ENCODE measurements at regions of chr7 and their contacts with region 1.

Region 1: DNA sequence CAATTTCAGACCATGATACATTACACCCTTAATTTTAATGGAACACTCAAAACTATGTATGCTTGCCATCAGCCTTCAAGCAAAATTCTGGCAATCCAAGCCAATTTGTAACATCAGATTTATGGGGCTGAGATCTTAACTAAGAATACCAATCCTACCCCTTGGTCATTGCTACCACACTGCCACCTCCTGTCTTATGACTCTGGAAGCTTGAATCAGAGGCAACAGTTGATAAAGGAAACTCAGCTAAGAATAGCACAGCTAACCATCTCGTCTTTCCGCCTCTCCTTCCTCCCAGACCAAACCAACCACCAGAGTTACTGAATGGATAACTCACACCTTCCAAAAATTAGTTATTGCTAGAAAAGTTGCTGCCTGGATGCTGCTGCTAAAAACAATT is 7.4 kb downstream of the IGF2BP3 start:
- DNase-seq: no peak
- H3K4me3 ChIP-seq: no peak overlapping the region
- CTCF ChIP-seq: peak; percentile 37

Region 2: GRCh38 chr7:22876986-22877729 is 585.7 kb before region 1 on chr7:
- CTCF ChIA-PET with region 1: no interaction called
- POLR2A ChIA-PET with region 1: no interaction called
- DNase-seq: no peak
- H3K4me3 ChIP-seq: no peak overlapping the region
- CTCF ChIP-seq: no peak

Region 3: DNA sequence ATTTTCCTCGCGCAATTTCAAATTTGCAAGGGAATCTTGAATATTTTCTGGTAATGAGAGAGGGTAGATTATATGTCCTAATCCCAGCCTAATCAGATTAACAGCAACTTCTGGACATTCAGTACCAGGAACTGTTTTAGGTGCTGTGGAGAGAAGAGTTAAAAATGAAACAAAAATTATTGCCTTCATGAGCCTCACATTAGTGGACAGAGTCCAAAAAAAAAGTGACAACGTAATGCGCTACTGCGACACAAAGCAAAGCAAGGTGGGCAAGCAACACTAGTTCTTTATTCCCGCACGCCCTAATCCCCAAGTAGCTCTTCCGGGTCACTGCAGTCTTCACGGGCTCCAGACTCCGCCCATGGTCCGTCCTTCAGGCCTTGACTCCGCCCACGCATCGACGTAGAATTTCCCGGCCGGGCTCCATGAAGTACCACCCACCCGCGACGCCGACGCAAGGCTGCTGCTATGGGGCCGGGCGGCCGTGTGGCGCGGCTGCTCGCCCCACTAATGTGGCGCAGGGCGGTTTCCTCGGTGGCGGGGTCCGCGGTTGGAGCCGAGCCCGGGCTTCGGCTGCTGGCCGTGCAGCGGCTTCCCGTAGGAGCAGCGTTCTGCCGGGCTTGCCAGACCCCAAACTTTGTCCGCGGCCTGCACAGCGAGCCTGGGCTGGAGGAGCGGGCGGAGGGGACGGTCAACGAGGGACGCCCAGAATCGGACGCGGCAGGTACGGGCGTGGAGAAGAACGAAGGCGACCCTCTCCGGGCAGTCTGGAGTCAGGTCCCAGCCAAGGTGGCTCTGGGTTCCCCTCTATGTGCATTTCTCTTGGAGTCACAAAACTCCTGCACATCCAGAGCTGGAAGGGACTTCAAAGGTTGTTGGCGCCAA is 163.7 kb before region 1 on chr7 and contains the start of gene MALSU1:
- CTCF ChIA-PET with region 1: interaction called, 11 read pairs
- POLR2A ChIA-PET with region 1: no interaction called
- DNase-seq: peak; percentile 65
- H3K4me3 ChIP-seq: peak within 1 kb of the TSS; percentile 91
- CTCF ChIP-seq: no peak

Region 4: DNA sequence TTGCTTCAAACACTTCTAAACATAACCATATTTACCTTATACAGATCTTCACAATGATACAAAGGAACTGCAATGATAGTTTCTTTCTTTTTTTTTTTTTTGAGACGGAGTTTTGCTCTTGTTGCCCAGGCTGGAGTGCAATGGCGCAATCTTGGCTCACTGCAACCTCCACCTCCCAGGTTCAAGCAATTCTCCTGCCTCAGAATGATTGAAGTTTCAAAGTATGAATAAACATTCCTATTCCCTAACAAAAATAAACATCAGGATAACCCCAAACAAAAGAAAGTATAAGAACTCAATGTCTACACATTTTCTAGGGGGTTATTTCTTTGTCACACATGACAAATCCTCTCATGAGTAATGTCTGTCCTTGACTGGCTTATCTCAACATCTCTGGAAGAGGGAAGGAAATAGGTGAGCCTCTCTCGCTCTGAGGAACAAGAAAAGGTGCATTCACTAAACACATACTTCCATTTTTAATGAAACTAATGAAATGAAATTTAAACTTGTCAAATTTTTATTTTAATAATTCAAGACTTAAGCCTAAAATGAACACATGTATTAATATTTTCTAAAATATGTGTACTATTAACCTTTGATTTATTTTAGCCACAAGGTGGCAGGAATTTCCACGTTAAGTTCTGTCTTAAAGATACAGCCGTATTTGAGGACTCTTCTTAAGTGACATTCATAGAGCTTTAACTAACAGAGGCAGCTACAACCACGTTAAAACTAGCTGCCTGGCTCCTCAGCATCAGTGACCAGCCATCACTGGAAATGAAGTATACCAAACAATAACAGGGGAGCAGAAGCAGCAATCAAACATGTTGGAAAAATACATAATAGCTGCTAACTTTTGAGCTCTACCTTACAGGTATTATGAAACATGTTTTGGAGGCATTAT is 105.4 kb before region 1 on chr7:
- CTCF ChIA-PET with region 1: interaction called, 25 read pairs
- POLR2A ChIA-PET with region 1: interaction called, 5 read pairs
- DNase-seq: no peak
- H3K4me3 ChIP-seq: no peak overlapping the region
- CTCF ChIP-seq: no peak

Region 5: DNA sequence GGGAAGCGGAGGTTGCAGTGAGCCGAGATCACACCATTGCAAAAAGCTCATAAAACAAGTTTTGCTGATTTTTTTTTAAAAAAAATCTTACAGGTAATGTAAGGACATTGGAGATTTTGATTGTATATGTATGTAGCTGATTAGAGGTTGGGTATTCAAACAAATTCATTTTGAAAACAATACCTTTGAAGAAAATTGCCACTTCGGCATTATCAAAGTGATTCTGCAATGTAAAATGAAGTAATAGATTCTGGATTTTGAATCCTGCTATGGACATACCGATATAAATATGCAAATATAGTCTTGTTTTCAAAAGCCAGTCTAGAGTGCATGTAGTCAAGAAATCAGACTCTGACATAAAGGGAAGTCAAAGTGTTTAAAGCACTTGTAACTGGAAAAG is 19.8 kb after region 1 on chr7:
- CTCF ChIA-PET with region 1: no interaction called
- POLR2A ChIA-PET with region 1: no interaction called
- DNase-seq: no peak
- H3K4me3 ChIP-seq: no peak overlapping the region
- CTCF ChIP-seq: no peak